ENCODE measurements at regions of chr12 and their contacts with region 1.

Region 1: GRCh38 chr12:3275171-3276041 is 198.2 kb downstream of the TSPAN9 start:
- DNase-seq: peak; percentile 32
- H3K4me3 ChIP-seq: no peak overlapping the region
- H3K27ac ChIP-seq: no peak overlapping the region
- H3K4me1 ChIP-seq: peaks cover 9% of the 10 kb centered on the region
- H3K27me3 ChIP-seq: no peaks in the 10 kb centered on the region
- CTCF ChIP-seq: peak; percentile 93 to 99

Region 2: DNA sequence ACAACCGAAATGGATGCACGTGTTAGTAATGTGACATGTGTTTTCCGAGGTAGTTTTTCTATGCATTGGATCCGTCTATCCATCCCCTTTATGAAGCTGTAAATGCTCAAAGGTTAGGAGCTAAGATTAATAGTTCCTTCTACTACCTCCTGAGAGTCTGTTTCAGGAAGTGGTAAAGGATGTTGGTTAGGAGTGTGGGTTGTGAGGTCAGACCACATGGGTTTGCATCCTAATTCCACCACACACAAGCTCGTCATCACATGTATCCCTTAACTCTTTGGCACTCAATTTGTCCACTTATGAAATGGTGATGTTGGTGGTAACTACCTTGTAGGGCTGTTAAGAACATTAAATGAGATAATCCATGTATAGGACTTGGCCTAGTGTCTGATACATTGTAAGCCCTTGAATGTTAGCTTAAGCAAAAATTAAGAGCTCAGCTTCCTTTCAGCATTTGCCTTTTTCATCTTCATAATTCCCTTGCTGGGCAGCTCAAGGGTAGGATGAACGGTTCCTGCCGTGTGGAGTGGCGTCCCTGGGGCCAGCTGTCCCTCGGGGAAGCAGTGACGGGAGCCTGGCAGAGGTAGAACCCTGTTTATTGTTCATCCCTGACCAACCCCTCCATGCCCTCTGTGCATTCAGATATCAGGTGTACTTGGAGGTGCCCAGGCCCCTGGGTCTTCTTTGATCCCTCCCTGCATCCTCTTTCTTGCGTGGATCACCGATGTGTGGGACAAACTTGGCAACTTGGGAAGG is 145.9 kb before region 1 on chr12:
- CTCF ChIA-PET with region 1: no interaction called
- dilution Hi-C with region 1: loop called (anchors 5 kb)
- in situ Hi-C with region 1: no loop called
- intact Hi-C with region 1: no loop called
- DNase-seq: peak; percentile 78
- H3K4me3 ChIP-seq: no peak overlapping the region
- H3K27ac ChIP-seq: no peak overlapping the region
- H3K4me1 ChIP-seq: peaks cover 21% of the 10 kb centered on the region
- H3K27me3 ChIP-seq: no peaks in the 10 kb centered on the region
- CTCF ChIP-seq: no peak

Region 3: GRCh38 chr12:3177778-3178425 is 97.5 kb before region 1 on chr12:
- CTCF ChIA-PET with region 1: no interaction called
- dilution Hi-C with region 1: loop called (anchors 5 kb)
- in situ Hi-C with region 1: no loop called
- intact Hi-C with region 1: no loop called
- DNase-seq: no peak
- H3K4me3 ChIP-seq: no peak overlapping the region
- H3K27ac ChIP-seq: no peak overlapping the region
- H3K4me1 ChIP-seq: no peaks in the 10 kb centered on the region
- H3K27me3 ChIP-seq: no peaks in the 10 kb centered on the region
- CTCF ChIP-seq: no peak

Region 4: GRCh38 chr12:3218228-3219171 is 56.9 kb before region 1 on chr12:
- CTCF ChIA-PET with region 1: no interaction called
- dilution Hi-C with region 1: no loop called
- in situ Hi-C with region 1: no loop called
- intact Hi-C with region 1: loop called (anchors 5 kb)
- DNase-seq: peak; percentile 47
- H3K4me3 ChIP-seq: no peak overlapping the region
- H3K27ac ChIP-seq: peak overlapping the region; percentile 72
- H3K4me1 ChIP-seq: peaks cover 33% of the 10 kb centered on the region
- H3K27me3 ChIP-seq: no peaks in the 10 kb centered on the region
- CTCF ChIP-seq: no peak

Measured in mammary epithelial cell (primary cell).